BJ (cell line): ENCODE measurements at regions of chr13 and their contacts with region 1.

Region 1: DNA sequence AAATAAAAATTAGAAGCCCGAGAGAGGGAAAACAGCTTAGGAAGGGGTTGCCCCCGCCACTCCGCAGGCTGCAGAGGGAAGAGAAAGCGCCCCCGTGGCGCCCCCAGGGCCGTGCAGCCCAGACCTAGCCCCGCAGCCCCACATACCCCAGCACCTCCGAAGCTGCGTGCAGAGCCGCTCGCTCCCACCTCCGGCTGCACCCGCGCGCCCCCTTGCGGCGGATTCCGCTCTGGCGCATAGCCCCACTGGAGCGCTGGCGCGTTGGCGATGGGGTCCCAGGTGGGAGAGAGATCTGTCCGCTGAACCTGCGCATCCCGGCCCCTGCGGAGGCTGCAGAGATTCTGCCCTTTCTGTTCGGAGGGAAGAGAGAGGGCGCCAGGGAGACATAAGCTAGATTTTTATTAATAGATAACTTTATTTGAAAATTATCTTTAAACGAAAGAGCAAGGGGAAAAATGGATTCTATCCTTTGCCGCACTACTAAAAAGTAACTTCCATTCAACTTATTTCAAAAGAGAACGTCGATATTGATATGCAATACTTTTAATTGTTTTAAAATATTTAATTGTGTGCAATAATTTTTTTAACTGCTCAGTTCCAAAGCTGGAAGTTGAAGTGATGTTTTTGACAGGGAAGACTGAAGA is 11.7 kb upstream of the CLN5 start:
- DNase-seq: no peak
- H3K4me3 ChIP-seq: peak overlapping the region; percentile 29
- H3K27me3 ChIP-seq: peaks cover 21% of the 10 kb centered on the region
- CTCF ChIP-seq: peak; percentile 100

Region 2: DNA sequence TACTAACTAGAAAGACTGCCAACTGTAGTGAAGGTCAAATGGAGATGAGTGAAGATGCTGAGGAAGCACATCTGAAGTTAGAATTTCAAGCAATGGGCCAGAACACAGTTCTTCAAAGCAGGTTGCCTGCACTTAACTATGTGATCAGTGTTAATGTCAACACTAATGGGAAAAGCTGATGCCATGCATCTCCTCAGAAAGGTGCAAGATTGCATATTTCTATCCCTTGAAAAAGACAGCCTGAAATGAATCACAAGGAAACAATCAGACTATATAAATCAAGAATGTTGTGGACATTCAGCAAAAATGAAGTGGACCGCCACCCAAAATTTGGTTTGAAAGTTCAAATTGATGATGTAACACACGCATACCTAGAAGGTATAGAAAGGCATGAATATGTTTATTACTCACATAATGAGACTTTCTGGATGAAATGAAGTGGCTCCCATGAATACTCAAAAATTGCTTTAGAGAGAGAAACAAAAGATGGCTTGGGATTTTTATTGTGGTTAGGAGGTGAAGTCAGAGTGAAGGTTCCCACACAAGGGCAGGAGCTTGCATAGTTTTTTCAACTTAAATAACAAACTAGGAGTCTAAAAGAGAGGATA is 616.4 kb before region 1 on chr13:
- CTCF ChIA-PET with region 1: no interaction called
- POLR2A ChIA-PET with region 1: no interaction called
- DNase-seq: no peak
- H3K4me3 ChIP-seq: no peak overlapping the region
- H3K27me3 ChIP-seq: no peaks in the 10 kb centered on the region
- CTCF ChIP-seq: no peak

Region 3: GRCh38 chr13:76667551-76667950 is 312.6 kb before region 1 on chr13:
- CTCF ChIA-PET with region 1: interaction called, 16 read pairs
- POLR2A ChIA-PET with region 1: no interaction called
- DNase-seq: no peak
- H3K4me3 ChIP-seq: no peak overlapping the region
- H3K27me3 ChIP-seq: no peaks in the 10 kb centered on the region
- CTCF ChIP-seq: peak; percentile 50

Region 4: GRCh38 chr13:76707360-76707759 is 272.8 kb before region 1 on chr13:
- CTCF ChIA-PET with region 1: no interaction called
- POLR2A ChIA-PET with region 1: no interaction called
- DNase-seq: no peak
- H3K4me3 ChIP-seq: no peak overlapping the region
- H3K27me3 ChIP-seq: no peaks in the 10 kb centered on the region
- CTCF ChIP-seq: no peak

Region 5: DNA sequence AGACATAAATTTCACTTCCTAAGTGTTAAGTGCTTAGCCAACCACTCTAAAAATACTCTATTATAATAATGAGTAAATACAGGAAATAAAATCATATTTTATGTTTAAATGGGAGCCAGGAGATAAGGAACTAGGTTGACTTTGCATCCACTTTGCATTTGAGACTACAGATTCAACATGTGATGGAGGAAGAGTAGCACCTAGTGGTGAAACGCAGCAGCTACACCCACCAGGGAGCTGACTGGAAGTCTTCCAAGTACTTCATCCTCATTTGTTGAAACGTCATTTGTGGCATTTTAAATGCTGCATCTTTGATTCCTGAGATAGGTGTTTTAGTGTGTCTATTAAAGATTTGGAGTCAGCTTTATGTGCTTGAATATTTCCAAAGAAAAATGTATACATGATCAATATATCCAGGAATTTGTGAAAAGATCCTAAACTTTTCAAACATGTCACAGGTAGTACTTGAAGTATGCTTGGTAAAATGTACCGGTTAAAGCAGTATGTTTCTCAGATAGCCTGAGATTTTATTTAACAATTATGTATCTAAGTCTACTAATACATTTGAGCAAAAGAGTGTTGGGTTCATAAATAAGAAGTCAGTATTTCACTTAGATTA is 76.5 kb before region 1 on chr13:
- CTCF ChIA-PET with region 1: interaction called, 11 read pairs
- POLR2A ChIA-PET with region 1: no interaction called
- DNase-seq: no peak
- H3K4me3 ChIP-seq: no peak overlapping the region
- H3K27me3 ChIP-seq: peaks cover 10% of the 10 kb centered on the region
- CTCF ChIP-seq: peak; percentile 98

Region 6: GRCh38 chr13:76965759-76966421 is 14.3 kb before region 1 on chr13:
- CTCF ChIA-PET with region 1: interaction called, 27 read pairs
- POLR2A ChIA-PET with region 1: no interaction called
- DNase-seq: peak; percentile 44
- H3K4me3 ChIP-seq: no peak overlapping the region
- H3K27me3 ChIP-seq: peaks cover 2% of the 10 kb centered on the region; the same call in 1 of the 2 replicates
- CTCF ChIP-seq: no peak

Region 7: DNA sequence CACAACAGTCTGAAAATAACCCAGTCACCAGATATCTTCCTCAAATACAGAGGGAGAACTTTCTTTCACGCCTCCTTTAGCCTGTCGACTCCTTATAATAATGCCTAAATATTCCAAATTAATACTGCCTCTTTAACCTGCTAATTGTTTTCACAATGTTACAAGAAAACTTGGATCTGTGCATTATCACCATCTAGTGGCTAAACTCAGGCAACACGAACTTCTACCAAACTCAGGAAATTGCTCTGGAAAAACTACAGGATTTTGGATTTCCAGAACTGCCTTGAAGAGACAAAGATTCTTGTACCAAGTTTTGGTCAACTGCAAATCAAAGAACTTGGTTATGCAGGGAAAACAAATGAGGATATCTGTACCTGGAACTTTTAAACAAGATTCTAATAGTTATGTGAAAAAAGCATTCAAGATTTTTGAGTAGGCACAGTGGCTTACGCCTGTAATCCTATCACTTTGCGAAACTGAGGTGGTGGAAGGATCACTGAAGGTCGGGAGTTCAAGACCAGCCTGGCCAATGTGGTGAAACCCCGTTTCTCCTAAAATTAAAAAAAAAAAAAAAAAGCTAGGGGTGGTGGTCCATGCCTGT is 22.5 kb after region 1 on chr13:
- CTCF ChIA-PET with region 1: interaction called, 21 read pairs
- POLR2A ChIA-PET with region 1: interaction called, 3 read pairs
- DNase-seq: no peak
- H3K4me3 ChIP-seq: no peak overlapping the region
- H3K27me3 ChIP-seq: no peaks in the 10 kb centered on the region
- CTCF ChIP-seq: peak; percentile 74